ENCODE measurements at regions of chr4 and their contacts with region 1.

Region 1: DNA sequence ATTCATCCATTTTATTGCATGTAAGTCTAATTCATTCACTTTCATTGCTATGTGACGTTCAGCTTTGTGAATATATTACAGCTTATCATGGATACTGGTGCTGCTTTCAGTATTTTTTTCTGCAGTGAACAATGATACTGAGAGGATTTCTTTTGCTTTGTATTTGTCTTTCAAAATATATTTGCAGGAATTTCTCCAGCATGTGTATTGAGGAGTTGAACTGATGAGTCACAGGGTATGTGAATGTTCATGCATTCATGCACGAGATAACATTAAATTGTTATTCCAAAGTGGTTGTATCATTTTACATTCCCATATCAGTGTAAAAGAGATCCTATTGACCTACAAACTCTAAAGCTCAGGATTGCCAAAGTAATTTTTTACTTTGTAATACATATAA is 283.8 kb upstream of the ARSJ start:
- DNase-seq: peak; percentile 39
- H3K4me3 ChIP-seq: no peak overlapping the region
- H3K27ac ChIP-seq: no peak overlapping the region
- H3K4me1 ChIP-seq: peaks cover 6% of the 10 kb centered on the region
- H3K27me3 ChIP-seq: no peaks in the 10 kb centered on the region
- CTCF ChIP-seq: no peak
- POLR2A ChIP-seq: no peak

Region 2: DNA sequence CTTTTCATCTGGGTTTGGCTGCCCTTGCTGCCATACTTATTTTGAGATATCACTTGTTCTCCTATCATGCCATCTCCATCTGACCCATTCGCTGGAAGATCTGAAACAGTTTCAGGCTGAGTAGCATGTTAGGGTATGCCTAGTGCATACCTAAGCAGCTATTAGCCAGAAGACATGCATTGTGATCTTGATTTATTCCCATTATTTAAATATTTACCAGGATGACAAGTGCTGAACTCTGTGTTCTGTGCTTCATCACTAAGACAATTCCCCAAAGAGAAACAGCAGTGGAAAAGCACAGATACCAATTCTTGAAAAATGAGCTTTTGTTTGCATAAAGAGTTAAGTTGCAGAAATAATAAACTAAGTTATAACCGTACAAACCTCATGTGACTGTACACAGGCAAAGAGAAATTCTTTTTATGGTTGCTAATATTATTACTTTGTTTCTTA is 12.8 kb before region 1 on chr4:
- CTCF ChIA-PET with region 1: interaction called, 42 read pairs
- POLR2A ChIA-PET with region 1: no interaction called
- dilution Hi-C with region 1: no loop called
- intact Hi-C with region 1: loop called (anchors 1 kb)
- DNase-seq: no peak
- H3K4me3 ChIP-seq: no peak overlapping the region
- H3K27ac ChIP-seq: no peak overlapping the region
- H3K4me1 ChIP-seq: no peaks in the 10 kb centered on the region
- H3K27me3 ChIP-seq: no peaks in the 10 kb centered on the region
- CTCF ChIP-seq: no peak
- POLR2A ChIP-seq: no peak